ENCODE measurements at regions of chr3 and their contacts with region 1.

Region 1: DNA sequence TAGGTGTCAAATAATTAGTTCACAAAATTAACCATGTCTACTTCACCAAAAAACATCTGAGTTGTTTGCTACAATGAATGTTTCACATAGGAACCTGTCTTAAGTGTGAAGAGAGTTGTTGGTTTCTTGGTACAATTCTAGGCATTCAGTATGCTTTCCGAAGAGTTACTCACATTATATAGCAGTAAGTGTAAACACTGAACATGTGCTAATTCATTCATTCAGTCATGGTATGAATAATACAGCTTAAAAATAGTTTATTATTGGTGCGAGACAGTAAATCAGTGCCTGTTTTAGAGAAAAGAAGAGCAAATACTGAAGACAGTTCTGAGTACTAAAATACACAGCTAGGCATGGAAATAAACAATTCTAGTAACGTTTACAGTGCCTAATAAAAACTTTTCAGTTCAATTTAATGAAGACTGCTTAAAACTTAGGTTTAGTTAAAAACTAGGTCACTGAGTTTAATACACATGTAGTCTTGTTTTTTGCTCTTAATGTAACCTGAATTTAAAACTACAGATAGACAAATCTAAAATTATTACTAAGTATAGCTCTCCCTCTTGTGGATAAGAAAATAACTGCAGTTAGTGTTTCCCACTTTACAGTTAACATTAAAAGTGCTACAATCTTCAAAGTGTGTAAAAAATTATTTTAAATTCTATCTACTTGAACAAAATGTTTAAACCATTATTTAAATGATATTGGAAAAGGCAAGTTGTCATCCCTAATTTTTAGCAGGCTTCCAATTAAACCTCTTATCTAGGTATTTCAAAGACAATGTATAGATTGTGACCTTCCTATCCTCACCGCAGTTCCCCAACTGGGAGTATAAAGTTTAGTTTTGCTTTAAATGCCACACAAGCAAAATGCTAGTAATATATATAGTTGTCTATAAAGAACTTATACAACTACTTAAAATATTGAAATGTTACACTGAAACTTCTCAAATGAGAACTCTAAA is 20.1 kb upstream of the ZCWPW2 start:
- DNase-seq: peak in 1 of 35 experiments; percentile 72
- ATAC-seq: peak in 2 of 4 experiments; percentile 56 to 64
- H3K4me3 ChIP-seq: no peak overlapping the region
- H3K4me3 Mint-ChIP-seq: no peak overlapping the region
- H3K27ac ChIP-seq: no peak overlapping the region
- H3K27ac Mint-ChIP-seq: no peak overlapping the region
- H3K4me1 ChIP-seq: peaks cover 0 to 4% of the 10 kb centered on the region in 2 experiments
- H3K4me1 Mint-ChIP-seq: peaks cover 0 to 30% (median 23%) of the 10 kb centered on the region in 3 donors
- H3K27me3 ChIP-seq: no peaks in the 10 kb centered on the region
- H3K27me3 Mint-ChIP-seq: no peaks in the 10 kb centered on the region

Region 2: DNA sequence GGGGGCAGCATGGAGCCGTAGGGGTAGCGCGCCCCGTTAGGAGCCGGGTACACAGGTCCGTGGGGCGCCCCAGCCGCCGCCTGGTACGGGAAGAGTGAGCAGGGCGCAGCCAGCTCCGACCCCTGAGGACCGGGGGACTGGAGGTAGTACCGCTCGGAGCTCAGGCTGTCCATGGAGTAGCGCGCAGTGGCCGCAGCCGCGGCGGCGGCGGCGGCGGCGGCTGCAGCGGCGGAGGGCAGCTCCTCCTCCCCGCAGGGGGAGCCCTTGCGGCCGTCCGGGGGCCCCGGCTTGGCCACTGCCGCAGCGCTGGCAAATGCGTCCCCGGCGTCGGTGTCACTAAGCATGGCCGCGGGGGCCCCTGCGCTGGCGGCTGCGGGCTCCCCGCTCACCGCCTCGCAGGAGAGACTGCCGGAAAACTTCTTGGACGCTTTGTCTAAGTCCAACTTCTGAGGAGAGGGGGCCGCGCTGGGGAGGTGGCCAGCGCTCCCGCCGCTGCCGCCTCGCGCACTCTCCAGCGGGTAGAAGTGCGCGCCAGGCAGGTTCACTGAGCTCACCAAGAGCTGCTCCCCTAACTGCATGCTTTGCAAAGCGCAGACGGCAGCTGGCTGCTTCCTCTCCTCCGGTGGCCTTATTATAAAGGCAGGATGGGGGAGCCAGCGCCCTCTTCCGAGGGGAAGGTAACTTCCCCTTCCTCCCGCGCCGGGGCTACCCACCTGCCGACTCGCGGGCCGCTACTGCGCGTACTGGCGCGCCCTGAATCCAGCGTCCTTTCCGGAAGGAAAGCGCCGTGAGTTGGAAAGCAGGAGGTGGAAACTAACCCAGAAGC is 606.5 kb before region 1 on chr3 and contains the start of gene EOMES:
- CTCF ChIA-PET with region 1: interaction called, 8 to 36 read pairs
- POLR2A ChIA-PET with region 1: no interaction called
- DNase-seq: peak; percentile 57 to 87 (median 69)
- ATAC-seq: peak; percentile 81 to 84 (median 83)
- H3K4me3 ChIP-seq: peak within 1 kb of the TSS; percentile 74 to 93
- H3K4me3 Mint-ChIP-seq: peak within 1 kb of the TSS; percentile 84 to 89 (median 87)
- H3K27ac ChIP-seq: peak within 1 kb of the TSS; percentile 48
- H3K27ac Mint-ChIP-seq: peak within 1 kb of the TSS; percentile 34 to 66
- H3K4me1 ChIP-seq: peaks cover 16 to 45% of the 10 kb centered on the region in 2 experiments
- H3K4me1 Mint-ChIP-seq: peaks cover 33 to 40% (median 38%) of the 10 kb centered on the region in 3 donors
- H3K27me3 ChIP-seq: peaks cover 24 to 49% of the 10 kb centered on the region in 2 experiments
- H3K27me3 Mint-ChIP-seq: peaks cover 42 to 68% of the 10 kb centered on the region in 2 donors
- total RNA-seq, gene EOMES: 6.2 to 22.8 (median 14.4) TPM

Region 3: DNA sequence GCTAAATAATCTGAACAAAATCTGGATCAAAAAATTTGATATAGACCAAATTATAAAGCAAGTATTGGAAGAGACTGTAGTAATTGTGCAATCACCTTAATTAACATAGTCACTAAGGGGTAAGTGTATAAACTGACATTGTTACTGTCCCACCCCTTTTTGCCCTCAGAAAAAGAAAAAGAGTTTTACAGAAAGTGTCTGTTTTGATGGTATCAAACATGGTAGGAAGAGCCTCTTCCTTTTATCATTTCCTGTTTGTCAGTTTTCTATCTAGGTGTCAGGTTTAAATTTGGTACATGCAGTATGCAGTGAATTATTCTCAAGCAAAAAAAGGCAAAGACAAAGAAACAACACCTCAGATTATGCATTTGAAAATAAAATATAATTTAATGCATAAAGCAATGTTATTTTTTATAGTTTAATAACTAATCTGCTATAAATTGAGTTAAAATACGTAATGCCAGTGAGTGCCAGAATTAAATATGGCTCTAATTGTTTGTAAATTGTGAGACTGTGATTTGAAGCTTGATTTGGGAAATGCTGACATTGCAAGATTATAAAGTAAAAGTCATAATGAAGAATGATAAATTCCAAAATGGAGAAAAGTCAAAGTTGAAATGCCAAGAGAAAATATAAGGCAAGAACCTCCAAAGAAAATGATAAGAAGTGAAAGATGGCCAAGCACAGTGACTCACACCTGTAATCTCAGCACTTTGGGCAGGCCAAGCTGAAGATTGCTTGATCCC is 117.3 kb before region 1 on chr3:
- CTCF ChIA-PET with region 1: no interaction called
- POLR2A ChIA-PET with region 1: interaction called in 1 of 2 experiments, 12 read pairs
- DNase-seq: peak in 1 of 35 experiments; percentile 36
- ATAC-seq: peak; percentile 87 to 95 (median 89)
- H3K4me3 ChIP-seq: no peak overlapping the region
- H3K4me3 Mint-ChIP-seq: peak overlapping the region in 1 of 3 donors; percentile 23
- H3K27ac ChIP-seq: peak overlapping the region; percentile 47
- H3K27ac Mint-ChIP-seq: peak overlapping the region; percentile 61 to 78
- H3K4me1 ChIP-seq: peaks cover 8 to 15% of the 10 kb centered on the region in 2 experiments
- H3K4me1 Mint-ChIP-seq: peaks cover 27 to 38% (median 31%) of the 10 kb centered on the region in 3 donors
- H3K27me3 ChIP-seq: no peaks in the 10 kb centered on the region
- H3K27me3 Mint-ChIP-seq: no peaks in the 10 kb centered on the region

Region 4: GRCh38 chr3:28286595-28286994 is 41.9 kb before region 1 on chr3:
- CTCF ChIA-PET with region 1: interaction called, 3 to 12 read pairs
- POLR2A ChIA-PET with region 1: no interaction called
- DNase-seq: peak in 1 of 35 experiments; percentile 62
- ATAC-seq: peak; percentile 50 to 84 (median 78)
- H3K4me3 ChIP-seq: no peak overlapping the region
- H3K4me3 Mint-ChIP-seq: no peak overlapping the region
- H3K27ac ChIP-seq: no peak overlapping the region
- H3K27ac Mint-ChIP-seq: no peak overlapping the region
- H3K4me1 ChIP-seq: no peaks in the 10 kb centered on the region
- H3K4me1 Mint-ChIP-seq: peaks cover 13 to 21% (median 18%) of the 10 kb centered on the region in 3 donors
- H3K27me3 ChIP-seq: no peaks in the 10 kb centered on the region
- H3K27me3 Mint-ChIP-seq: no peaks in the 10 kb centered on the region

Region 5: DNA sequence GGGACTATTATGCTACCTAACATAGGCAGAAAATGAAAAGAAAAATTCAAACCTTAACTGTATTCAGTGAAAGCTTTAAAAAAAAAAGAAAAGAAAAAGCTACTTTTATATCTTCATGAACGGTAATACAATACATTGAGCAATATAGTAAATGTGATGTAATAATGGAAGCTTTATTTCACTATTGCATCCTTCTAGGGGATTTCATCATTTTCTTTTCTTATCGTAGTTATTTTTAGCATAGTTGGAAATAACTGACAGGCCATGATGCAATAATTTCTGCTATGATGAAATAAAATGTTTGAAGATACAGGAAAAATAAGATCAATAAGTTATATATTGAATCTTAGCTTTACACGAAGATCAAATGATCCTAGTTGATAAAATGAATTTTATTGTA is 20.3 kb before region 1 on chr3:
- CTCF ChIA-PET with region 1: interaction called, 3 to 5 read pairs
- POLR2A ChIA-PET with region 1: interaction called in 1 of 2 experiments, 12 read pairs
- DNase-seq: no peak
- ATAC-seq: no peak
- H3K4me3 ChIP-seq: no peak overlapping the region
- H3K4me3 Mint-ChIP-seq: no peak overlapping the region
- H3K27ac ChIP-seq: no peak overlapping the region
- H3K27ac Mint-ChIP-seq: no peak overlapping the region
- H3K4me1 ChIP-seq: no peaks in the 10 kb centered on the region
- H3K4me1 Mint-ChIP-seq: peaks cover 9 to 20% (median 12%) of the 10 kb centered on the region in 3 donors
- H3K27me3 ChIP-seq: no peaks in the 10 kb centered on the region
- H3K27me3 Mint-ChIP-seq: no peaks in the 10 kb centered on the region

Region 6: DNA sequence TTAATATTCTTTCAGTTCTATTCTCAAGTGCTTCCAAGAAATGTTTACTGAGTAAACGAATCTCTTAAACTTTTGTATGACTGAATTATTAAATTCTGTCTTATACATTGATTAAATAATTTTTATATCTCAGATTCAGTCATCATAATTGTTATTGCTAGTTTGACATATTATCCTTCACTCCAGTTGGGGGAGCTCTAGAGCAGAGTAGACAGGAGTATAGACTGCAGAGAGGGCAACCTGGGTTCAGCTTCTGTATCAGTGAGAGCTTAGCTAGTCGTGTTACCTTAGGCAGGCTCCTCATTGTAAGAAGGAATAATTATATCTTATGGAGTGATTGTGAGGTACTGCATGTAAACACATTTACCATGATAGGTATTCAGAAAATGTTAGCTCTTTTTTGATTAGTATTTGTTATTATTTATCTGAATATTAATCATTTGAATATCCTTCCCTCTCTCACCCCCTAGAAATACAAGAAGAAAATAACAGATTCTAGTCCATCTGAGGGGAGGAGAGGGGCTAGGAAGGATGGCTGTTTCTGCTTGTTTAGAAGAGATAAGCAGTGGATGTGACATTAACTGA is 10.9 kb before region 1 on chr3:
- CTCF ChIA-PET with region 1: interaction called, 9 to 72 read pairs
- POLR2A ChIA-PET with region 1: interaction called, 3 read pairs
- DNase-seq: peak in 25 of 35 experiments; percentile 1 to 79 (median 17)
- ATAC-seq: peak; percentile 76 to 94 (median 88)
- H3K4me3 ChIP-seq: no peak overlapping the region
- H3K4me3 Mint-ChIP-seq: no peak overlapping the region
- H3K27ac ChIP-seq: no peak overlapping the region
- H3K27ac Mint-ChIP-seq: no peak overlapping the region
- H3K4me1 ChIP-seq: no peaks in the 10 kb centered on the region
- H3K4me1 Mint-ChIP-seq: peaks cover 0 to 22% (median 14%) of the 10 kb centered on the region in 3 donors
- H3K27me3 ChIP-seq: no peaks in the 10 kb centered on the region
- H3K27me3 Mint-ChIP-seq: no peaks in the 10 kb centered on the region

Region 7: GRCh38 chr3:28348629-28349483 is 20.4 kb after region 1 on chr3 and contains the starts of genes AZI2 and ZCWPW2:
- CTCF ChIA-PET with region 1: interaction called in 1 of 2 experiments, 12 read pairs
- POLR2A ChIA-PET with region 1: interaction called in 1 of 2 experiments, 6 read pairs
- DNase-seq: peak; percentile 81 to 95 (median 88)
- ATAC-seq: peak; percentile 89 to 97 (median 92)
- H3K4me3 ChIP-seq: peak within 1 kb of the TSS; percentile 92 to 95
- H3K4me3 Mint-ChIP-seq: peak within 1 kb of the TSS; percentile 88 to 99 (median 96)
- H3K27ac ChIP-seq: peak within 1 kb of the TSS; percentile 94
- H3K27ac Mint-ChIP-seq: peak within 1 kb of the TSS; percentile 95 to 99
- H3K4me1 ChIP-seq: peaks cover 12 to 26% of the 10 kb centered on the region in 2 experiments
- H3K4me1 Mint-ChIP-seq: peaks cover 47 to 65% (median 55%) of the 10 kb centered on the region in 3 donors
- H3K27me3 ChIP-seq: no peaks in the 10 kb centered on the region
- H3K27me3 Mint-ChIP-seq: no peaks in the 10 kb centered on the region
- total RNA-seq, gene AZI2: 29.5 to 38.6 (median 30.6) TPM
- total RNA-seq, gene ZCWPW2: 0.23 to 0.79 (median 0.50) TPM in 4 of 5 donors, not detected in the other

Region 8: DNA sequence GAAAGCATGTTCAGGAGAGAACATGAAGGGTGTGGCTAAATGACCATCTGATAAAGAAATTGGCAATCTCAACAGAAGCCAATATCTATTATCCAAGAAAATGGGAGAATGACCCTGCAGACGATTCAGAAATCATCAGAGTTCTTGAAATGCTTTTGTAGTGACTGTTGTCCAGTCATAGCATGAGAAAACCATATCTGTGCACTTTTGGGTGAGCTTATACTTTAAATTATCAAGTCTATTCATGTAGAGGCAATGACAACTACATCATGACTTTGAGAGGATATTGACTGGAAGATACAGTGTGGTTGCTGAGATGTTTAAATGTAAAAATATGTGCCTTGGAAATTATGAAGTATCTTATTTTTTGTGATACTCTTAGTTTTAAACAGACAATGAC is 77.8 kb after region 1 on chr3:
- CTCF ChIA-PET with region 1: no interaction called
- POLR2A ChIA-PET with region 1: no interaction called
- DNase-seq: no peak
- ATAC-seq: no peak
- H3K4me3 ChIP-seq: no peak overlapping the region
- H3K4me3 Mint-ChIP-seq: no peak overlapping the region
- H3K27ac ChIP-seq: no peak overlapping the region
- H3K27ac Mint-ChIP-seq: no peak overlapping the region
- H3K4me1 ChIP-seq: no peaks in the 10 kb centered on the region
- H3K4me1 Mint-ChIP-seq: no peaks in the 10 kb centered on the region
- H3K27me3 ChIP-seq: no peaks in the 10 kb centered on the region
- H3K27me3 Mint-ChIP-seq: peaks cover 0 to 3% of the 10 kb centered on the region in 2 donors

Region 9: GRCh38 chr3:28449398-28449797 is 120.9 kb after region 1 on chr3:
- CTCF ChIA-PET with region 1: no interaction called
- POLR2A ChIA-PET with region 1: no interaction called
- DNase-seq: no peak
- ATAC-seq: no peak
- H3K4me3 ChIP-seq: no peak overlapping the region
- H3K4me3 Mint-ChIP-seq: no peak overlapping the region
- H3K27ac ChIP-seq: no peak overlapping the region
- H3K27ac Mint-ChIP-seq: no peak overlapping the region
- H3K4me1 ChIP-seq: no peaks in the 10 kb centered on the region
- H3K4me1 Mint-ChIP-seq: no peaks in the 10 kb centered on the region
- H3K27me3 ChIP-seq: no peaks in the 10 kb centered on the region
- H3K27me3 Mint-ChIP-seq: no peaks in the 10 kb centered on the region

Region 10: DNA sequence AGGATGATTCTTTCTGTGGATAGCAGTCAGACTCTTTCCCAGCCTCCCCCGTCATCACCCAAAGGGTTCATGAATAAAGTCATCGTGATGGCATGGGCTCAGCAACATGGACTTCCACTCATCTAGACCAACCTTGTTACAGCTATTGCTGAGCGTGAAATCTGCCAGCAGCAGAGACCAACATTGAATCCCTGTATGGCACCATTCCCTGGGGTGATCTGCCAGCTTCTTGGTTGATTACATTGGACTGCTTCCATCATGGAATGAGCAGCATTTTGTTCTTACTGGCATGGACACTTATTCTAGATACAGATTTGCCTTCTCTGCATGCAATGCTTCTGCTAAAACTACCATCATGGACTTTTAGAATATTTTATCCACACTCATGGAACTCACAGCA is 215.8 kb after region 1 on chr3:
- CTCF ChIA-PET with region 1: no interaction called
- POLR2A ChIA-PET with region 1: no interaction called
- DNase-seq: no peak
- ATAC-seq: no peak
- H3K4me3 ChIP-seq: no peak overlapping the region
- H3K4me3 Mint-ChIP-seq: no peak overlapping the region
- H3K27ac ChIP-seq: no peak overlapping the region
- H3K27ac Mint-ChIP-seq: no peak overlapping the region
- H3K4me1 ChIP-seq: no peaks in the 10 kb centered on the region
- H3K4me1 Mint-ChIP-seq: no peaks in the 10 kb centered on the region
- H3K27me3 ChIP-seq: no peaks in the 10 kb centered on the region
- H3K27me3 Mint-ChIP-seq: no peaks in the 10 kb centered on the region

Measured in T-cell (primary cell).